GM10248 (cell line): ENCODE measurements at regions of chr13 and their contacts with region 1.

Region 1: DNA sequence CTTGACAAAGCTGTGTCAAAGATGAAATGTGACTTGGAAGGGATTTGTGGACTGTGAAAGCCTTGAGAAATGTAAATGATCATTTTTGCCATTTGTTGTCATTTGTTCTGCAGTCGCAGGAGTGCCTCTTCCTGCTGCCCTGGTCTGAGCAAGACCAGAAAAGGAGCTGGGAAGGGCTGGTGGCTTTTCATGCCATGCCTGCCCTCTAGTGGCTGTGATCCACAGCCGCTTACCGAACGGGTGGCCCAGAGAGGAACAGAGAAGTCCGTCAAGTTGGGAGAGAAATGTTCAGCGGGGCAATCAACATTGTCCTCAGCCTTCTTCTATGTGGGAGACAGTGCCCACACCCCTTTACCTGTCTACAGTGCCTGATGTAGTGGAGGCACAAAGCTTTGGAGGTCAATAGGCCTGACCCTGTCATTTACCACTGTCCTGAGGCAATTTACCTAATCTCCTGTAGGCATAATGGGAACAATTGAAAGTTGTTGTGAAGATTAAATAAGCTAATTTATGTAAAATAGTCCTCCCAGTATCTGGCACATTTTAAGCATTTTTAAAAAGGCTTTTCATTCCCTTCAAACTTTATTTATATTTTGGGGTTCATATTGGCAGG is 224.4 kb downstream of the B3GLCT start:
- DNase-seq: peak; percentile 69
- CTCF ChIP-seq: peak; percentile 92

Region 2: GRCh38 chr13:31236211-31236786 is 187.9 kb before region 1 on chr13:
- CTCF ChIA-PET with region 1: interaction called, 57 read pairs
- POLR2A ChIA-PET with region 1: no interaction called
- DNase-seq: peak; percentile 28
- CTCF ChIP-seq: peak; percentile 55

Region 3: DNA sequence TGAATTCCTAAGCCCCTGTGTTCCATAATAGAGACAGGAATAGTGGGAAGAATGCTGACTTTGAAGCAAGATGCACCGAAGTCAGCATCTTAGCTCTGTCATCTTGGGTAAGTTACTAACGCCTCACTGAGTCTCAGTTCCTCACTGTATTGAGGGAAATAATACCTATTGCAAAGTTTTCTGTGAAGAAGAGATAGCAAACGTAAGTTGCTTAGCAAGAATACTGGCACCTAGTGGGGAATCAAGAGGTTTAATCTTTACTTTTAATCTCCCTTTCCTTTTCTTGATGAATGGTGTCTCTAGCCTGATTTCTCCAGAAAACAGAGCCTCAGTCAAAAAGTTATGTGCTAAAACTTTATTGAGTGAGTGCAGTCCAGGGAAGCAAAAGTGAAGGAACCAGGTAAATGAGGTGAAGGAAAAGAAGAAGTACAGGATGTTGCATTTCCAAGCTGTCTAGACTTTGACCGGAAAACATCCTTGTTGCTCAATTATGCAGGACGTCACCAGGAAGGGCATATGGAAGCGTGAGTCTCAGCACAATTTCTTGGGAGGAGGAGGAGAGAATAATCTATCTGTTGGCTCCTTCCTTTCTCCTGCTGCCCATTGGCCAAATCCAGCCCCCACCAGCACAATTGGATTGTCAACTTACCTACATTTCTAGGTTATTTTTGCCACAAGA is 14.4 kb before region 1 on chr13:
- CTCF ChIA-PET with region 1: interaction called, 15 read pairs
- POLR2A ChIA-PET with region 1: no interaction called
- DNase-seq: no peak
- CTCF ChIP-seq: no peak